ENCODE measurements at regions of chr3 and their contacts with region 1.

Region 1: GRCh38 chr3:197364410-197365071 is 66.1 kb upstream of the DLG1 start:
- DNase-seq: no peak
- H3K4me3 ChIP-seq: no peak overlapping the region
- H3K27me3 ChIP-seq: no peaks in the 10 kb centered on the region
- CTCF ChIP-seq: no peak

Region 2: DNA sequence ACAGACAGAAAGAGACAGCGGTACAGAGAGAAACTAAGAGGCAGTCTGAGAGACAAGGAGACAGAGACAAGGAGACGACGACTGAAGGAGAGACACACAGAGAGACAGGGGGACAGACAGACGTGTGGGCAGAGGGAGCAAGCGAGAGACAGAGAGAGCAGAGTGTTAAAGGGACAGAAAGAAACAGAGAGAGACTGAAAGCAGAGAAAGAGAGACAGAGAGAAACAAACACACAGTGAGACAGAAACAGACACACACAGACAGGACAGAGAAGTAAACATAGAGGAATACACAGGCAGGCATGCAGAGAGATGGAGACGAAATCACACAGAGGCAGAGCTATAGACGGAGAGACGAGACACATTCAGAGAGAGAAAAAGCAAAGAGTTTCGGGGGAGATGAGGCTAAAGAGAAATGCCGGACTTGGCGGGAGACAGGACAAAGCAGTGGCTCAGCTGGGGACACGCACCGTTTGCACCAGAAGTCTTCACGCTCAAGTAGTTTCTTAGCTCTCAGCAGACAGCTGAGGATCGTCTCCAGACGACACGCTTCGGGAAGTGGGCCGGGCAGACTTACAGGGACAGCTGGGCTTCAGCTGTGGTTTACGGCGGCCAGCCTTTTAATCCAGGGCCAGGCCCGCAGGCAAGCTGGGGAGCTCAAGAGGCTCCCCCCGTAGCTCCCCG is 10.1 kb before region 1 on chr3:
- CTCF ChIA-PET with region 1: interaction called, 12 read pairs
- POLR2A ChIA-PET with region 1: no interaction called
- DNase-seq: no peak
- H3K4me3 ChIP-seq: no peak overlapping the region
- H3K27me3 ChIP-seq: no peaks in the 10 kb centered on the region; the same call in 1 of the 2 replicates
- CTCF ChIP-seq: no peak

Region 3: GRCh38 chr3:197466586-197467399 is 102.3 kb after region 1 on chr3:
- CTCF ChIA-PET with region 1: no interaction called
- POLR2A ChIA-PET with region 1: no interaction called
- DNase-seq: peak; percentile 78
- H3K4me3 ChIP-seq: no peak overlapping the region
- H3K27me3 ChIP-seq: no peaks in the 10 kb centered on the region
- CTCF ChIP-seq: no peak

Region 4: DNA sequence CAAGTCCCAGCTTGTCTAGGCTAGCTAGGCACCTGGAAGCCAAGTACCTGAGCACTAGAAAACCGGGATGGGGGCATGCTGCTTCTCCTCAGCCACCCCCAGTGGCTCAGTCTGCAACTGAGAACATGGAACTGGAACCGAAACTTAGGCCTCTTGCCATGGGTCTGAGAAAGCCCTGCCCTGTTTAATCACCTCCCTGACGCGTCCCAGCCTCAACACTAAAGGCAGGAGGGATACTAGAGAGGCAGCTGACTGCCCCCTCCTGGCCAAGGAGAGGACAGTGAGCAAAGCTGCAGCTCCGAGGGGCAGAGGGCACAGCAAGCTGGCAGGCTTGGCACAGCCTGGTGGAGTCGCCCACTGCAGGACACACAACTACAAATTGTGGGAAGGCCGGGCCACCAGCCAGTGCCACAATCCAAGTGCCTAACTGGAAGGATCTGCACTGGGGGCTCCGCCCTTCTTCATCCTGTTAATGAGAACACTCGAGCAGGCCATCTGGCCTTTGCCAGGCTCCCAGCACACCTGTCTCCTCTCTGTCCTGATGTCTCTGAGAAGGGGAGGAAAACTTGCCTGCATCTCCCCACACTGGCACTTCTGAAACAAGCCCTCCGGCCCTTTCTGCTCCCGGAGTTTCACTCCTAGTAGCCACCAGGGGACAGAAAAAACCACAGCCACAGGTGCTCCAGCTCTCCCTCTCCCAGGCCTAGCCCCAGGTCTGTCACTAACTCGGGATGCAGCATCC is 137.5 kb after region 1 on chr3:
- CTCF ChIA-PET with region 1: no interaction called
- POLR2A ChIA-PET with region 1: no interaction called
- DNase-seq: no peak
- H3K4me3 ChIP-seq: no peak overlapping the region
- H3K27me3 ChIP-seq: no peaks in the 10 kb centered on the region
- CTCF ChIP-seq: peak; percentile 46

Measured in BJ (cell line).